ENCODE measurements at regions of chr4 and their contacts with region 1.

Region 1: GRCh38 chr4:78517050-78517652 is 34.4 kb upstream of the ANXA3 start:
- DNase-seq: peak; percentile 15
- H3K4me3 ChIP-seq: no peak overlapping the region
- H3K27ac ChIP-seq: no peak overlapping the region
- H3K4me1 ChIP-seq: no peaks in the 10 kb centered on the region
- H3K27me3 ChIP-seq: no peaks in the 10 kb centered on the region
- CTCF ChIP-seq: peak; percentile 55

Region 2: DNA sequence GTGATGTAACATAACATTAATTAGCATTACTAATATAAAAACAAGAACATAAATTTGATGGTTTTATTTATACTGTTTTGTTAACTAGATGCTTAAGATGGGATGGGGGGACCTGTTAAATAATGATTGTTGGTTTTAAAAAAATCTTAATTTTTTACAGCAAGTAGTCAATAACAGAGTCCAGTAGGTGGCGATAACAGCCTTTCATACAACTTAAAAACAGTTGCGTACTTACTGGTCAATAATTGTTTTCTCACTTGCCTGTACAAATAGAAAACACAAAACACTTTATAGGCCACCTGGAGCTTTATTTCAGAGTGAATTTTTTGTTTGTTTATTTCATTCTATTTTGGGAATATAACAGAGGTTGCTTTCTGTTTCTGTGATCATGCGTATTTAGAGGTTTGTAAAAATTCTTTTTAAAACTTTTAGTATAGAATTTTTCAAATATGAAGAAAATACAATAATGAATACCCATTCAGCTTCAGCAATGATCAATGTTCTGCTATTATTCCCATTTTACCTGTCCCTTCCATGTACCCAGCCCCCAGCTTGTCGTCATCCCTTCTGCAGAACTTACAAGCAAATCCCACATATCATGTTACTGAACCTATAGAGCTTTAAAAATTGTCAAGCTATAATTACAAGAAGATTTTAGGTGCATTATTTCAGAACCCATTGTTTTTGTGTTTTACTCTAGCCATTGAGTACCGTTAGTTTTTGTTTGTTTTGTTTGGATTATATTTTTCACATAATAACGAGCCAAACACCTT is 557.4 kb before region 1 on chr4:
- CTCF ChIA-PET with region 1: no interaction called
- POLR2A ChIA-PET with region 1: no interaction called
- intact Hi-C with region 1: loop called (anchors 5 kb)
- DNase-seq: peak; percentile 38
- H3K4me3 ChIP-seq: no peak overlapping the region
- H3K27ac ChIP-seq: no peak overlapping the region
- H3K4me1 ChIP-seq: no peaks in the 10 kb centered on the region
- H3K27me3 ChIP-seq: no peaks in the 10 kb centered on the region
- CTCF ChIP-seq: peak; percentile 55

Region 3: GRCh38 chr4:77994194-77994721 is 522.9 kb before region 1 on chr4:
- CTCF ChIA-PET with region 1: no interaction called
- POLR2A ChIA-PET with region 1: no interaction called
- intact Hi-C with region 1: loop called (anchors 10 kb)
- DNase-seq: peak; percentile 53
- H3K4me3 ChIP-seq: no peak overlapping the region
- H3K27ac ChIP-seq: no peak overlapping the region
- H3K4me1 ChIP-seq: no peaks in the 10 kb centered on the region
- H3K27me3 ChIP-seq: no peaks in the 10 kb centered on the region
- CTCF ChIP-seq: peak; percentile 54

Region 4: GRCh38 chr4:78061939-78062570 is 455.1 kb before region 1 on chr4:
- CTCF ChIA-PET with region 1: no interaction called
- POLR2A ChIA-PET with region 1: no interaction called
- intact Hi-C with region 1: loop called (anchors 2 kb)
- DNase-seq: no peak
- H3K4me3 ChIP-seq: no peak overlapping the region
- H3K27ac ChIP-seq: no peak overlapping the region
- H3K4me1 ChIP-seq: no peaks in the 10 kb centered on the region
- H3K27me3 ChIP-seq: peaks cover 4% of the 10 kb centered on the region
- CTCF ChIP-seq: no peak

Region 5: DNA sequence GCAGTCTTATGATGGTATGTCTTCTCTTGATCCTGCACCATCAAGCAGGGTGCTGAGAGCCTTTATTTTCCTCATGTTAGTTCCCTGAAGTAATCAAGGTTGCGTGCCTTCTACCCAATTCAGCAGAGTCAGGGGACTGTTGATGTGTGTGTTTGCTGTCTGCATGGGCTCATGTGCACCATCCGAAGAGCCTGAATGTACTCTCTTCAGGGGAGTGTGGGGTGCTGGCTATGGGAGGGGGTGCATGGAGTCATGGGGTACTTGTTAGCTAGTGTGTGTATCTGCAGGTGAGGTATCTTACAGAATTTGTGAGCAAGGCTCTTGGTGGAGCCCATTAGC is 119.9 kb before region 1 on chr4:
- CTCF ChIA-PET with region 1: no interaction called
- POLR2A ChIA-PET with region 1: no interaction called
- intact Hi-C with region 1: no loop called
- DNase-seq: no peak
- H3K4me3 ChIP-seq: no peak overlapping the region
- H3K27ac ChIP-seq: no peak overlapping the region
- H3K4me1 ChIP-seq: no peaks in the 10 kb centered on the region
- H3K27me3 ChIP-seq: no peaks in the 10 kb centered on the region
- CTCF ChIP-seq: no peak

Region 6: DNA sequence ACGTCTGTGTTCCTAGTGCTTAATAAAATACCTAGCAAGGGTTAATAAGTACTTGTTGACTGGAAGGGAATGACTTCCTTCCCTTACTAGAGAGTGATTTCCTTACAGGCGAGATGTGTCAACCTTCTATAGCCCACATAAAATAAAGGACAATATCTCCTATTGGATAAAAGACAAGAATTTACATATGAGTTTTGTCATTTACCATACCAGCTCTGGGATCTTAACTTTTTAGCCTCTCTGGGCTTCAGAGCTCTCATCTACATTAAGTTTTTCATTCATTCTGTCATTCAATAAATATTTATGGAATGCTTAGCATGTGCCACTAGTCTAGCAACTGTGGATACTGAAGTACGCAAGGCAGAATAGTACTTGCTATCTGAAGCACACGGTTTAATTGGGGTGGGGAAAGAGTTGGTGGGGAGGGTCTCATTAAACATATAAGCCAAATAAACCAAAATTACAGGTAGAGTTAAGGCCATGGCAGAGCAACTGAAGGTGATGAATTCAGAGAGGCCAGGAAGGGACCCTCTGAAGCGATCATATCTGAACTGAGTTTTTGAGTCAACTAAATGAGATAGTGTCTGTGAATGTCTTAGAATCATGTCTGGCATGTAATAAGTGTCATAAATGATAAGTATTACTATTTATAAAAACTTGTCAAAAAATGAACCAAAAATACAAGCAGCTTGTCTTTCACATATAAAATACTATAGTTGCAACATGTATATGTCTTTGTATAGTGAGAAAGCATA is 167.4 kb after region 1 on chr4:
- CTCF ChIA-PET with region 1: no interaction called
- POLR2A ChIA-PET with region 1: no interaction called
- intact Hi-C with region 1: no loop called
- DNase-seq: no peak
- H3K4me3 ChIP-seq: no peak overlapping the region
- H3K27ac ChIP-seq: no peak overlapping the region
- H3K4me1 ChIP-seq: no peaks in the 10 kb centered on the region
- H3K27me3 ChIP-seq: no peaks in the 10 kb centered on the region
- CTCF ChIP-seq: no peak

Measured in A673 (cell line).